Heart left ventricle (tissue), 16 donors: ENCODE measurements at regions of chr12 and their contacts with region 1.

Region 1: DNA sequence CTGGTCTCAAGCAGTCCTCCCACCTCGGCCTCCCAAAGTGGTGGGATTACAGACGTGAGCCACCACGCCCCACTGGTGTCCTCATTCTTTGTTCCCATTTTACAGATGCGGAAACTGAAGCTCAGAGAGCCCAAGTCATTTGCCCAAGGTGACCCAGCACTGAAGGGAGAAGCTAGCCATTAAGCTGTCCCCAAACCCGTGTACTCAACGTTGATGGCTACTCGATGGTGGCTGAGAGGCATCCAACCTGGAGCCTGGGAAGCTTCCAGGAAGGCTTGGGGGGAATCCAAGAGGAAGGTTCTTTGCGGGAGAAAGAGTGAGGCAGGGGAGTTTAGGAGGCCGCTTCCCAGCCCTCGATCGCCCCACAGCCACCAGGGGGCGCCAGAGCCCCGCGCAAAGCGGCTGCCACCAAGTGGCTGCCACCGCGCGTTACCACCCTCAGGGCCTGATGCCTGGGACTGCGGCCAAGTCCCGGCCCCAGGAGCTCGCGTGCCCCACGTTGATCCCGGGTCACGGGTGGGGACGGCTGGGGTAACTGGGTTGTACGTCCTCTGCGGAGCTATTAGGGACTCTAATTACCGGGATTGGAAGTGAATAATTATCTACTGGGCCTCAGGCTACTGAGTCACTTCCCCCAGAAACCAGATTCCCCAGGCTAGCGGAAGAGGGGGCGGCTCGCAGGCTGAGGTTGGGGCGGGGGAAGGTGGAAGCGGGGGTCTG is 8.8 kb upstream of the SH2B3 start:
- DNase-seq: peak; percentile 86 to 95 (median 89)
- ATAC-seq: peak; percentile 64 to 90 (median 88)
- H3K4me3 ChIP-seq: peak overlapping the region in 10 of 12 donors; percentile 26 to 47 (median 40)
- H3K27ac ChIP-seq: peak overlapping the region in 10 of 12 donors; percentile 17 to 87 (median 52)
- H3K4me1 ChIP-seq: peaks cover 0 to 41% (median 7%) of the 10 kb centered on the region in 12 donors
- H3K27me3 ChIP-seq: no peaks in the 10 kb centered on the region
- CTCF ChIP-seq: peak; percentile 99 to 100 (median 99)
- POLR2A ChIP-seq: peak in 1 of 2 donors; percentile 37

Region 2: GRCh38 chr12:111248236-111249017 is 148.5 kb before region 1 on chr12:
- intact Hi-C with region 1: no loop called
- DNase-seq: no peak
- ATAC-seq: no peak
- H3K4me3 ChIP-seq: no peak overlapping the region
- H3K27ac ChIP-seq: no peak overlapping the region
- H3K4me1 ChIP-seq: peaks cover 0 to 8% (median 0%) of the 10 kb centered on the region in 12 donors
- H3K27me3 ChIP-seq: peaks cover 0 to 4% (median 0%) of the 10 kb centered on the region in 9 donors
- CTCF ChIP-seq: no peak
- POLR2A ChIP-seq: no peak

Region 3: DNA sequence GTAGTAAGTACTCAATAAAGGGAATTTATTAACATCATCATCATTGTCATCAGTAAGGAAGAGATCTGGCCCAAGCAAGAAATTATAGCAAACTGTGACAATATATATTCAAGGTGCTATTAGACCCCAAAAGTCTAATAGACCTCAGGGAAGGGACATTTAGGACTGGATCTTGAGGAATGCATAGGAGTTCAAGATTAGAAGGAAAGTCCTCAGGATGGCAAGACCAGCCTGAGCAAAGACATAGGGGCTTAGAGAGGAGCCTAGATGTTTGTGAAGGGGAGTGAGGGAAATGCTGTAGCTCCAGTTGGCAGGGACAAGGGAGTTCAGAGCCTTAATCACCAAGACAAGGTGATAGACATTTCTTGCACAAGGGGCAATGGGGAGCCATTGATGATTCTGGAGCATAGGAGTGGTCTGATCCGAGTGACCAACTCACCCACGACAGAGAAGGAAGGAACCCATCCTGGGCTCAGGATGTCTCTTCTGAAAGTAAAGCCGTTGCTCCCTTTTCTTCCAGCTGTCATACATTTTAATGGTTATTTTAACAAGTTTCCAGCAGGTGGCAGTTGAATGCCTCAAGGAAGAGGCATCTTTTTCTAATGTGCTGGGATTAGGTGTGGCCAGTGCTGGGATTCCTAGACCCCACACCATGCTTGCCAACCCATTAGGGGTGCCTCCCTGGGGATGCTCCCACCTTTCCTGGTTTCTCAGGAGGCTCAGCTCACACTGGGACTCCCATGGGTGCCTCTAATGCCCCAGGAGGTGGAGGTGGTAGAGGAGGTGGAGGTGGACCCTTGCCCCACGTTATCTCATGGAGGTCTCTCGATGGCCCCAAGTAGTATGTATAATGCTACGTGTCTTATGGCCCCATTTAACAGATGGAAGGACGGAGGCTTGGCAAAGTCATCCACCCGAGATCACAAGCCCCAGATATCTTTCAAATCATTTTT is 65.8 kb before region 1 on chr12:
- intact Hi-C with region 1: loop called in 2 of 10 experiments (anchors 5 kb)
- DNase-seq: no peak
- ATAC-seq: peak in 3 of 4 donors; percentile 35 to 45 (median 39)
- H3K4me3 ChIP-seq: no peak overlapping the region
- H3K27ac ChIP-seq: no peak overlapping the region
- H3K4me1 ChIP-seq: no peaks in the 10 kb centered on the region
- H3K27me3 ChIP-seq: peaks cover 0 to 7% (median 0%) of the 10 kb centered on the region in 9 donors
- CTCF ChIP-seq: peak; percentile 26 to 61 (median 40)
- POLR2A ChIP-seq: no peak

Region 4: DNA sequence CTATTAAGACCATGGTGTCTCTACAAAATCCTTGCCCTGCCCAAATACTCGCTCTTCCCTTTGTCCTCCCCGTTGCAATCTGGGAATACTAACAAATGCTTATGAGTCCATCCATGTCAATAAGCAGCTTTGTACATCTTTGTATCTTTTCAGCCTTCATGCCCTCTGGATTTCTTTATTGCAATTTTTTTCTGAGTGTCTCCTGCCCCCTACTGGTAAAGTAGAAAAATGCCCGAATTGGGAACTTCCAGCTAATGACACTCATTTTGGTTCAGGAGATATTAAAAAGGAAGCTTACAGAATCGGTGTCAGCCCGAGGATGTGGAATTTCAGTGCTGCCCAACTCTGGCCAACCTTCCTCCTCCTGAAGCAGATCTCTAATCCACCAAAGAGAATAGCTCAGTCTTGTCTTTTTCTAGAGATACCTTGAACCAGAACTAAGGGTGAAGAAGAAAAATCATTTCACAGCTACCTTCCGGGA is 54.8 kb after region 1 on chr12:
- intact Hi-C with region 1: loop called (anchors 1 to 2 kb)
- DNase-seq: no peak
- ATAC-seq: peak in 1 of 4 donors; percentile 2
- H3K4me3 ChIP-seq: no peak overlapping the region
- H3K27ac ChIP-seq: peak overlapping the region in 8 of 12 donors; percentile 45 to 89 (median 76)
- H3K4me1 ChIP-seq: peaks cover 10 to 77% (median 58%) of the 10 kb centered on the region in 12 donors
- H3K27me3 ChIP-seq: no peaks in the 10 kb centered on the region
- CTCF ChIP-seq: peak; percentile 72 to 88 (median 80)
- POLR2A ChIP-seq: no peak

Region 5: GRCh38 chr12:111529424-111530368 is 132.8 kb after region 1 on chr12:
- intact Hi-C with region 1: loop called (anchors 1 to 5 kb)
- DNase-seq: peak in 2 of 5 donors; percentile 20 to 36
- ATAC-seq: peak in 3 of 4 donors; percentile 54 to 56 (median 55)
- H3K4me3 ChIP-seq: no peak overlapping the region
- H3K27ac ChIP-seq: no peak overlapping the region
- H3K4me1 ChIP-seq: no peaks in the 10 kb centered on the region
- H3K27me3 ChIP-seq: no peaks in the 10 kb centered on the region
- CTCF ChIP-seq: peak; percentile 47 to 77 (median 68)
- POLR2A ChIP-seq: no peak

Region 6: DNA sequence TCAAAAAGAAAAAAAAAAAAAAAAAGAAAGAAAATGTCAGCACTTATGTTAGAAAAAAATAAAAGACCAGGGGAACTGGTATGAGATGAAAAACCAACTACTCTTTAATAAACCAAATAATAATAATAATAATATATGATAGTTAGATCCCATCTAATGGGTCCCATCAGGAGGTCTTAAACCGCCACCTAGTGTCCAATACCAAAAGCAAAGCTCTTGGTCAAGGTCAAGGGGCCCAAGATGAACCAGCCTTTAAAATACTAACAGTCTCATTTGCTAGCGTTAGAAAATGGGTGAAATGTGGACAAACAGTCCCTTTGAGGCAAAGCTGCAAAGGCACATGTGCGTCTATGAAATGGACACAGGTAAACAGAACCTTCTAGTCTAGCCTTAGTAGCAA is 276.6 kb after region 1 on chr12:
- intact Hi-C with region 1: loop called in 1 of 10 experiments (anchors 5 kb)
- DNase-seq: no peak
- ATAC-seq: no peak
- H3K4me3 ChIP-seq: no peak overlapping the region
- H3K27ac ChIP-seq: peak overlapping the region in 1 of 12 donors; percentile 24
- H3K4me1 ChIP-seq: no peaks in the 10 kb centered on the region
- H3K27me3 ChIP-seq: no peaks in the 10 kb centered on the region
- CTCF ChIP-seq: peak in 11 of 12 donors; percentile 14 to 63 (median 42)
- POLR2A ChIP-seq: no peak

Region 7: GRCh38 chr12:111685744-111686517 is 289.0 kb after region 1 on chr12 and contains the starts of genes ACAD10 and BRAP:
- intact Hi-C with region 1: loop called in 1 of 10 experiments (anchors 5 kb)
- DNase-seq: peak; percentile 94 to 98 (median 95)
- ATAC-seq: peak; percentile 97 to 99 (median 98)
- H3K4me3 ChIP-seq: peak within 1 kb of the TSS; percentile 68 to 97 (median 80)
- H3K27ac ChIP-seq: peak within 1 kb of the TSS; percentile 75 to 96 (median 88)
- H3K4me1 ChIP-seq: peaks cover 8 to 31% (median 26%) of the 10 kb centered on the region in 12 donors
- H3K27me3 ChIP-seq: no peaks in the 10 kb centered on the region
- CTCF ChIP-seq: peak in 1 of 12 donors; percentile 6
- POLR2A ChIP-seq: peak; percentile 56 to 83
- total RNA-seq, gene ACAD10: 18.0 to 46.0 (median 28.6) TPM
- total RNA-seq, gene BRAP: 12.1 to 19.7 (median 15.9) TPM

Region 8: DNA sequence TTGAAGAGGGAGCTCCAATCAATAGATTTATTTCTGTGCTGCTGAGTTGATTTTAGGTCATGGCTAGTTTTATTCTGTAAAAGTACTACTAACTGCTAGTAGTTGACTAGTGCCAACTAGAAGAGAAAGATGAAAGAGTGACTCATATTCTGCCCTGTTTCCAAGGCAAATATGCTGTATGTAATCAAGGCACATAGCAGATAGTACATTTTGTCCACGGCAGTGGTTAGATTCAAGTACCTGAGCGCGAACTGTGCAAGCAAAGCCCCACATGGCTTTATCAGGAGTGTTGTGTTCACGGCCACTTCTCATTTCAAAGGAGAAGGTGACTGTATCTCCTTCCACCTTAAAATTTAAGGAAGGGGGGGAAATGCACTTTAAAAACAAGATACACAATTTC is 855.3 kb after region 1 on chr12:
- intact Hi-C with region 1: no loop called
- DNase-seq: no peak
- ATAC-seq: no peak
- H3K4me3 ChIP-seq: no peak overlapping the region
- H3K27ac ChIP-seq: no peak overlapping the region
- H3K4me1 ChIP-seq: no peaks in the 10 kb centered on the region
- H3K27me3 ChIP-seq: no peaks in the 10 kb centered on the region
- CTCF ChIP-seq: no peak
- POLR2A ChIP-seq: no peak